Thyroid gland (tissue), 4 donors: ENCODE measurements at regions of chr9 and their contacts with region 1.

Region 1: GRCh38 chr9:121765021-121765950 is 113.9 kb downstream of the DAB2IP start:
- DNase-seq: peak in 1 of 2 donors; percentile 31
- H3K4me3 ChIP-seq: no peak overlapping the region
- H3K27ac ChIP-seq: peak overlapping the region in 1 of 3 donors; percentile 51
- H3K4me1 ChIP-seq: peaks cover 0 to 11% of the 10 kb centered on the region in 2 donors
- H3K27me3 ChIP-seq: no peaks in the 10 kb centered on the region
- CTCF ChIP-seq: no peak
- POLR2A ChIP-seq: no peak

Region 2: GRCh38 chr9:121819428-121820231 is 54.3 kb after region 1 on chr9:
- intact Hi-C with region 1: loop called (anchors 10 kb)
- DNase-seq: peak in 1 of 2 donors; percentile 71
- H3K4me3 ChIP-seq: no peak overlapping the region
- H3K27ac ChIP-seq: no peak overlapping the region
- H3K4me1 ChIP-seq: peaks cover 7 to 14% of the 10 kb centered on the region in 2 donors
- H3K27me3 ChIP-seq: no peaks in the 10 kb centered on the region
- CTCF ChIP-seq: no peak
- POLR2A ChIP-seq: no peak

Region 3: DNA sequence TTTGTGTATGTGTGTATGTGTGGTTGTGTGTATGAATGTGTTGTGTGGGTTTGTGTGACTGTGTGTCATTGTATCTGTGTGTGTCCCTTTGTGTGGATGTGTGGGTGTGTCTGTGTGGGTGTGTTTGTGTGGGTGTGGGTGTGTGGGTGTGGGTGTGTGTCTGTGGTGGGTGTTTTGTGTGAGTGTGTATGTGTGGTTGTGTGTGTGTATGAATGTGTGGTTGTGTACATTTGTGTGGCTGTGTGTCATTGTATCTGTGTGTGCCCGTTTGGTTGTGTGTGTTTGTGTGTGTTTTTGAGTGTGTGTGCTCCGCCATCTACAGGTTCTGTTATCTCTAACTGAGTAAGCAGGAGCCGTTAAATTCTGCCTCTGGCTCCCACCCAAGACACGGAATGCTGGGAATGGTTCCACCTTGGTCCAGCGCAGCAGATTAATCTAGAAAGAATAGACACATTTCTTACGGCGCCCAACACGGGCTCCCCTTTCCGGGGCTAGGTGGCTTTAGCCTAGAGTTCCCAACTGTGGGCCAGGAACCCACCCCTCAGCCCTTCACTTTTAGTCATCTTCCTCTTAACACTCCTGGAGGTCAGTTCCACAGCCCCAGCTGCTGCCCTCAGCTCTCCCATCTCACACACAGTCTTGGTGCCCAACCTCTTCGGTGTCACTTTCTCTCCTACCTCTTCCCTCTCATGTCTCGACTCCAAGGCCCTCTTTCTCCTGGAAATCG is 130.7 kb after region 1 on chr9:
- intact Hi-C with region 1: loop called (anchors 10 kb)
- DNase-seq: peak; percentile 24 to 55
- H3K4me3 ChIP-seq: no peak overlapping the region
- H3K27ac ChIP-seq: no peak overlapping the region
- H3K4me1 ChIP-seq: no peaks in the 10 kb centered on the region
- H3K27me3 ChIP-seq: no peaks in the 10 kb centered on the region
- CTCF ChIP-seq: no peak
- POLR2A ChIP-seq: no peak